ENCODE measurements at regions of chr12 and their contacts with region 1.

Region 1: GRCh38 chr12:109385339-109386067 is 37.8 kb downstream of the MYO1H start:
- DNase-seq: peak in 2 of 5 donors; percentile 53 to 72
- H3K4me3 ChIP-seq: no peak overlapping the region
- H3K27ac ChIP-seq: no peak overlapping the region
- H3K4me1 ChIP-seq: peaks cover 0 to 2% (median 0%) of the 10 kb centered on the region in 3 donors
- H3K27me3 ChIP-seq: no peaks in the 10 kb centered on the region
- CTCF ChIP-seq: peak; percentile 21

Region 2: DNA sequence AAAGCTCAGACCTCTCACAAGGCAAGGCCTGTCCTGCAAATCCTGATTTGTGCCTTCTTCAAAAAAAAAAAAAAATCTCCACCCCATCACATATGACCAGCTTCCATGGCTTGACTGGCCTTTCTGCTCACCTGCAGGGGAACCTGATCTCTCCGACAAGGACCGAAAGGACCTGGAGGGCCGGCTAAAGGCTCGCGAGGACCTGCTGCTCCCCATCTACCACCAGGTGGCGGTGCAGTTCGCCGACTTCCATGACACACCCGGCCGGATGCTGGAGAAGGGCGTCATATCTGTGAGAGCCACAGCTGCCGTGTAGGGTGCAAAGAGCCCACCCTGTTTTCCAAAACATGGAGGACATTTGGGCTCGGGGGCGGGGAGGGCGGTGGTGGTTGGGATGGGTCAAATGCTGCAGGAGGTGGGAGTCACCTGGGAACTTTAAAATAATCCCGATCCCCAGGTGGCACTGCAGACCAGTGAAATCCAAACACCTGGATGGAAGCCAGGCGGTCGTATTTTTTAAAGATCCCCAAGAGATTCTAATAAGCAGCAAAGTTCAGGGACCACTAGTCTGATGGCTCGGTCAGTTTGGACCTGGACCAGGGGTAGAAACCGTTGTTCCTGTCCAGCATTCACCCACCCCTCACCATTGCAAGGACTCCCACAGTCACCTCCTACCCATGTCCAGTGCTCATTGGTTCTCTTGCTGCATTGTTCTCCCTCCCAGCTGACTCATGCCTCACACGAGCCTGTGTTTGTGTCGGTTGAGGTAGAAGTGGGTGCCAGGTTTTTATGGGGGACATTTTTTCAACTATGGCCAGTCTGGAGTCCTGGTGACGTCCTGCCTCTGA is 121.2 kb before region 1 on chr12:
- intact Hi-C with region 1: loop called (anchors 10 kb)
- DNase-seq: peak; percentile 84 to 88 (median 87)
- H3K4me3 ChIP-seq: no peak overlapping the region
- H3K27ac ChIP-seq: no peak overlapping the region
- H3K4me1 ChIP-seq: peaks cover 0 to 2% (median 0%) of the 10 kb centered on the region in 3 donors
- H3K27me3 ChIP-seq: no peaks in the 10 kb centered on the region
- CTCF ChIP-seq: peak; percentile 69